ENCODE measurements at regions of chr2 and their contacts with region 1.

Region 1: DNA sequence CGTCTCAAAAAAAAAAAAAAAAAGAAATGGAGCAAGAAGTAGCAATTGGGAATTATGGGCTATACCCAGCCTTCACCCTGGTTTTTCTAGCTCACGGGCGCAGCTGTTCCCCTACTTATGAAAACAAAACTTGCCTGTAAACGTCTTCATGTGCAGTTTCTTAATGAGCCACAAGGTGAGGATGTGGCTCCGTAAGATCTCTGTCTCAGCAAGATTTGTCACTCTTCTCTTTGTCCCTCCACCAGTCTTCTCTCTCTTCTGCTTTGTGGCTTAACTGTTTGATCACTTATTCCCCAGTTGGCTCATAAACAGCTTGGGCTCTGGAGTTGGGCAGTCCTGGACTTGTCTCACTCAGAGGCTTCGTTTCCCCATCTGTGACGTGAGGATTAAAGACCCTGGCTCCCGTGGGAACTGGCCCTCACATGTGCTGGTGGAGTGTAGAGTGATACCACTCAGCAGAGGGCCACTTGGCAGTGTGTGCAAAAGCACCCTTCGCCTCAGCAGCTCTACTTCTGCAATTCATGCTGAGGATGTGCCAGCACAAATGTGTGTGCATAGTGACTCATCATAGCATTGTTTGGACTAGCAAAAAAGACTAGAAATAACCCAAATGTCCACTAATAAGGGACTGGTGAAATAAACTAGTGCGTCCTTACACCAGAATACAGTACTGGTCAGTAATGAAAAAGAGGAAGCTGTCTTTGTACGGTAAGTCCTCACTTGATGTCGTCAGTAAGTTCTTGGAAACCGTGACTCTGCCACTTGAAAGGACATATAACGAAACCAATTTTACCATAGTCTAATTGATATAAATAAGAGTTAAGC is 8.7 kb downstream of the CEP68 start:
- H3K4me3 ChIP-seq: no peak overlapping the region
- H3K27ac ChIP-seq: no peak overlapping the region
- H3K4me1 ChIP-seq: no peaks in the 10 kb centered on the region
- CTCF ChIP-seq: peak; percentile 86

Region 2: GRCh38 chr2:65169760-65170136 is 104.8 kb after region 1 on chr2:
- CTCF ChIA-PET with region 1: interaction called, 10 read pairs
- POLR2A ChIA-PET with region 1: no interaction called
- H3K4me3 ChIP-seq: no peak overlapping the region
- H3K27ac ChIP-seq: no peak overlapping the region
- H3K4me1 ChIP-seq: no peaks in the 10 kb centered on the region
- CTCF ChIP-seq: no peak

Measured in HEK293 (cell line).